GM13976 (cell line): ENCODE measurements at regions of chr16 and their contacts with region 1.

Region 1: DNA sequence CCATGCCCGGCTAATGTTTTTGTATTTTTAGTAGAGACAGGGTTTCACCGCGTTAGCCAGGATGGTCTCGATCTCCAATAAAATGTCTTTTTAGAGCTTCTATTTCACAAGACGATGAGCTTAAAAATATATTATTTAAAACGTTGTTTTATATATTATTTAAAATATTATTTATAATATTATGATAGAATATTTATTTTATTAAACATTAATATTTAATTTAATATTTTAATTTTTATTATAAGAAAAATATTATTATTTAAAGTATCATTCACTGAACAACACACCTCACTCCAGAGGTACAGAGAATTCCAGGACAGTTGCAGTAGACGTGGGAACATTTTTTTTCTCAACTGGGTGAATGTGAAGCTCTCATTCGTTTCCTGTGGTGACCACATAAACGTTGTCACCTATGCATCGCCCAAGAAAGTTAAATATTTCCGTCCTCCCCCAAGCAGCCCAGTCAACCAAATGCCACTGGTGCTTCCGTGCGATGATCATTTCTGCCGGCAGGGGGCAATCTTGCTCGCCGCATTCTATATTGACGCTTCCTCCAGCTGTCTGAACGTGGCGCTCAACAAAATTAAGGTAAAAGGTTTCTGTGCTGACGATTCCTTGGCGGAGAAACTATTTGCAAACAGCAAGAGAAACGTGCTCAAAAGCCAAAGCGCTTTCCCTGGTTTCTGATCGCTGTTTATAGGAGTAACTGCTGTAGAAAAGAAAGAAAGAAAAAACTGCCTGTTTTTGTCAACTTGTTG is 41.7 kb upstream of the PRSS54 start:
- DNase-seq: peak; percentile 83
- CTCF ChIP-seq: peak; percentile 81

Region 2: GRCh38 chr16:58661199-58661830 is 324.8 kb after region 1 on chr16:
- in situ Hi-C with region 1: loop called (anchors 25 kb)
- DNase-seq: peak; percentile 78
- CTCF ChIP-seq: peak; percentile 52